ENCODE measurements at regions of chr2 and their contacts with region 1.

Region 1: DNA sequence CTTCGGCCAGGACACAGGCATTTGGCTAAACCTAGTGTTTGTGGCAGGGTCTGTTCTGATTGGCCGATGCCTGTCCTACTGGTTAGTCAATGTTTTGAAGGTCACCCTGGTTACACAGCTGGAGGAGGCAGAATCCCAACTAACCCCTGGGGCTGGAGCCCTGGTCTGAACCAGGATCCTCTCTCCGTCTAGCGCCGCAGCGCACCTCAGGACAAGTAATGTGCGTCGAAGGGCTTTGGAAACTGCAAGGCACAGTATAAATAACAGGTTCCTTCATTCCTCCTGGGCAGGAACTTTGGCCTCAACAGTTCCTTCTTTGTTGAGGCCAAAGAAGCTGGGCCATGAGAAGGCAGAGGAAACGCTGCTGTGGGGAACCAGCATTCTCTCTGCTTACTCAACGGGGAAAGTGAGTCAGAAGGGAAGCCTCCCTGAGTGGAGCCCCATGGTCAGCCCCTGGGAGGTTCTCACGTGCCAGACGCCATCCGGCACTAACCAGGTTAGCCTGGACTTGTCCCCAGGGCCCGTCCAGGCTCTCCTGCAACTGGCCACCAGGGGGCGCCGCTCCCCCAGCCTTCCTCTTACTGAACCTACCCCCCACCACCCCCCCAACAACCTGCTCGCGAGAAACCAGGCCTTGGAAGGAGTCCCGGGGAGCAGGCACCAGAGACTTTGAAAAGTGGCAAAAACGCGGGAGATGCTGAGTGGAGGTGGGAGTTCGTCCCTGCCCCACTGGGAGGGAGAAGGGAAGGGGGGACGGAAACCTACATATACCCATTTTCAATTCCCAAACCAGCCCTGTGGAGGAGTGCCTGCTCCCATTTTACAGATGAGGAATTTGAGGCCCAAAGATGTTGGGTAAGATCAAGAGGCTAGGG is 19.8 kb downstream of the TEX44 start:
- DNase-seq: peak; percentile 95
- H3K4me3 Mint-ChIP-seq: peak overlapping the region; percentile 73
- H3K27ac Mint-ChIP-seq: peak overlapping the region; percentile 88
- H3K4me1 Mint-ChIP-seq: peaks cover 38% of the 10 kb centered on the region
- H3K27me3 Mint-ChIP-seq: no peaks in the 10 kb centered on the region

Region 2: GRCh38 chr2:231522799-231523180 is 89.6 kb before region 1 on chr2:
- CTCF ChIA-PET with region 1: interaction called, 15 read pairs
- POLR2A ChIA-PET with region 1: no interaction called
- DNase-seq: no peak
- H3K4me3 Mint-ChIP-seq: no peak overlapping the region
- H3K27ac Mint-ChIP-seq: no peak overlapping the region
- H3K4me1 Mint-ChIP-seq: peaks cover 57% of the 10 kb centered on the region
- H3K27me3 Mint-ChIP-seq: peaks cover 23% of the 10 kb centered on the region

Region 3: GRCh38 chr2:231642631-231643494 is 30.4 kb after region 1 on chr2:
- CTCF ChIA-PET with region 1: interaction called, 11 read pairs
- POLR2A ChIA-PET with region 1: interaction called, 18 read pairs
- DNase-seq: peak; percentile 66
- H3K4me3 Mint-ChIP-seq: peak overlapping the region; percentile 64
- H3K27ac Mint-ChIP-seq: peak overlapping the region; percentile 71
- H3K4me1 Mint-ChIP-seq: peaks cover 19% of the 10 kb centered on the region
- H3K27me3 Mint-ChIP-seq: no peaks in the 10 kb centered on the region

Region 4: GRCh38 chr2:231674587-231675338 is 62.3 kb after region 1 on chr2:
- CTCF ChIA-PET with region 1: interaction called, 259 read pairs
- POLR2A ChIA-PET with region 1: interaction called, 92 read pairs
- DNase-seq: peak; percentile 65
- H3K4me3 Mint-ChIP-seq: no peak overlapping the region
- H3K27ac Mint-ChIP-seq: peak overlapping the region; percentile 35
- H3K4me1 Mint-ChIP-seq: peaks cover 20% of the 10 kb centered on the region
- H3K27me3 Mint-ChIP-seq: no peaks in the 10 kb centered on the region

Region 5: GRCh38 chr2:231706731-231707624 is 94.6 kb after region 1 on chr2:
- CTCF ChIA-PET with region 1: interaction called, 144 read pairs
- POLR2A ChIA-PET with region 1: interaction called, 120 read pairs
- DNase-seq: peak; percentile 97
- H3K4me3 Mint-ChIP-seq: peak overlapping the region; percentile 91
- H3K27ac Mint-ChIP-seq: peak overlapping the region; percentile 100
- H3K4me1 Mint-ChIP-seq: peaks cover 20% of the 10 kb centered on the region
- H3K27me3 Mint-ChIP-seq: no peaks in the 10 kb centered on the region